Tibial artery (tissue), 4 donors: ENCODE measurements at regions of chr9 and their contacts with region 1.

Region 1: GRCh38 chr9:4984621-4985385 is at the start of gene JAK2:
- DNase-seq: peak; percentile 93 to 97
- H3K4me3 ChIP-seq: peak within 1 kb of the TSS; percentile 78 to 97
- H3K27ac ChIP-seq: peak within 1 kb of the TSS; percentile 94 to 99
- H3K4me1 ChIP-seq: peaks cover 0 to 61% (median 24%) of the 10 kb centered on the region in 4 donors
- H3K27me3 ChIP-seq: no peaks in the 10 kb centered on the region
- CTCF ChIP-seq: peak in 1 of 2 experiments; percentile 40

Region 2: GRCh38 chr9:4762108-4762885 is 222.5 kb before region 1 on chr9:
- intact Hi-C with region 1: loop called (anchors 5 kb)
- DNase-seq: peak; percentile 80 to 84
- H3K4me3 ChIP-seq: peak overlapping the region; percentile 26 to 43
- H3K27ac ChIP-seq: peak overlapping the region; percentile 44 to 66
- H3K4me1 ChIP-seq: peaks cover 0 to 19% (median 15%) of the 10 kb centered on the region in 4 donors
- H3K27me3 ChIP-seq: no peaks in the 10 kb centered on the region
- CTCF ChIP-seq: peak; percentile 77 to 83

Region 3: DNA sequence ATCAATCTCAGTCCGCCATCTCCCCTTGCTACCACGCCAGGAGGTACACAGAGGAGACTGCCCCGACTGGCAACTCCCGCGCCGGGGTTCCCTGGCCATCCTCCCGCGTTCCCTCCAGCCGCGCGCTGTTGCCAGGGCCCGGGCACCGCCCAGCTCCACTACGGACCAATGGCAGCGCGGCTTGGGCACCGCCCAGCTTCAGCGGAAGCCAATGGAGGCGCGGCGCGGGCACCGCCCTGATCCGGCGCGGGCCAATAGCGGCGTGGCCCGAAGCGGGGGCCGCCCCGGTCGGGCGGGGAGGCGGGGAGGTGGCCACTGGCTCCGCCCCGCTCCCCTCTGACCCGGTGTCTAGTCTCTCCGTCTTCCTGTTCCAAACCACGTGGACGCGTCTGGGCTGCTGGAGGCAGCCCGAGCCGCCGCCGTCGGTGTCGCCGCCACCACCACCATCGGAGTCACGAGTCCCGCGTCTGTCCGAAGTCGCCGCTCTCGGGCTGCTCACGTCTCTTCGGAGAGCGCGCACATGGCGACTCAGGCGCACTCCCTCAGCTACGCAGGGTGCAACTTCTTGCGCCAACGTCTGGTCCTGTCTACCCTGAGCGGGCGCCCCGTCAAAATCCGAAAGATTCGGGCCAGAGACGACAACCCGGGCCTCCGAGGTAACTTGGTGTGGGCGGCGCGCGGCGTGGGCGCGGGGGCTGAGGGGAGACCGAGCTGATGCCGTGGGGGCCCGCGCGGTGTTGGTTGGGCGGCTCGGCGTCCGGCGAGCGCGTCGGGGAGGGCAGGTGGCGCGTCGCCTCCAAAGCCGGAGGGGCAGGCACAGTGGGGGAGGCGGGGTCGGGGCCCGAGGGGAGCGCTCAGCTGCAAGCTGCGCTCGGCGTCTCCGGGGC is 192.0 kb before region 1 on chr9 and contains the start of gene RCL1:
- intact Hi-C with region 1: loop called (anchors 5 kb)
- DNase-seq: peak; percentile 96 to 98
- H3K4me3 ChIP-seq: peak within 1 kb of the TSS; percentile 91 to 98
- H3K27ac ChIP-seq: peak within 1 kb of the TSS; percentile 98 to 99
- H3K4me1 ChIP-seq: peaks cover 0 to 38% (median 14%) of the 10 kb centered on the region in 4 donors
- H3K27me3 ChIP-seq: no peaks in the 10 kb centered on the region
- CTCF ChIP-seq: peak in 1 of 2 experiments; percentile 8

Region 4: DNA sequence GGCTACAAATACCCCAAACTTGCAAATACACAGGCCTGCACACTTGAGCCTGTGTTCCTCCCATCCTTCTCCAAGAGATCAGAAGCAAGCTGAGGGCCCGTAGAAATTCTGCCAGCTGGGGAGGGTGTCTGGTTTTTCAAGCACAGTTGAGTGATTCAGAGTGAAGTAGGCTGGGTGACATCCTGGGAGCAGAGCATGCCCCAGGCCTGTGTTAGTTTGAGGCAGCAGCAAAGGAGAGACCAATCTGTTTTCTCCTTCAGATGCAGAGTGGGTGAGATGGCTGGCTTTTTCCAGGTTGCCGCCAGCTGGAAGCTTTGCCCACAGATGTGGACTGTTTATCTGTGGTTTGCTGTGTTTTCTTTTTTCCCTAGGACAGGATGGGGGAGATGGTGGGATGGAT is 129.0 kb before region 1 on chr9:
- intact Hi-C with region 1: loop called (anchors 5 kb)
- DNase-seq: peak; percentile 71 to 85
- H3K4me3 ChIP-seq: no peak overlapping the region
- H3K27ac ChIP-seq: peak overlapping the region; percentile 81 to 82
- H3K4me1 ChIP-seq: peaks cover 0 to 86% (median 50%) of the 10 kb centered on the region in 4 donors
- H3K27me3 ChIP-seq: no peaks in the 10 kb centered on the region
- CTCF ChIP-seq: no peak

Region 5: GRCh38 chr9:5188060-5188984 is 203.5 kb after region 1 on chr9:
- intact Hi-C with region 1: no loop called
- DNase-seq: no peak
- H3K4me3 ChIP-seq: peak overlapping the region in 1 of 2 donors; percentile 17
- H3K27ac ChIP-seq: no peak overlapping the region
- H3K4me1 ChIP-seq: peaks cover 0 to 8% (median 5%) of the 10 kb centered on the region in 4 donors
- H3K27me3 ChIP-seq: no peaks in the 10 kb centered on the region
- CTCF ChIP-seq: no peak